ENCODE measurements at regions of chr11 and their contacts with region 1.

Region 1: GRCh38 chr11:93784152-93784934 is at the start of gene MED17:
- DNase-seq: peak; percentile 91

Region 2: DNA sequence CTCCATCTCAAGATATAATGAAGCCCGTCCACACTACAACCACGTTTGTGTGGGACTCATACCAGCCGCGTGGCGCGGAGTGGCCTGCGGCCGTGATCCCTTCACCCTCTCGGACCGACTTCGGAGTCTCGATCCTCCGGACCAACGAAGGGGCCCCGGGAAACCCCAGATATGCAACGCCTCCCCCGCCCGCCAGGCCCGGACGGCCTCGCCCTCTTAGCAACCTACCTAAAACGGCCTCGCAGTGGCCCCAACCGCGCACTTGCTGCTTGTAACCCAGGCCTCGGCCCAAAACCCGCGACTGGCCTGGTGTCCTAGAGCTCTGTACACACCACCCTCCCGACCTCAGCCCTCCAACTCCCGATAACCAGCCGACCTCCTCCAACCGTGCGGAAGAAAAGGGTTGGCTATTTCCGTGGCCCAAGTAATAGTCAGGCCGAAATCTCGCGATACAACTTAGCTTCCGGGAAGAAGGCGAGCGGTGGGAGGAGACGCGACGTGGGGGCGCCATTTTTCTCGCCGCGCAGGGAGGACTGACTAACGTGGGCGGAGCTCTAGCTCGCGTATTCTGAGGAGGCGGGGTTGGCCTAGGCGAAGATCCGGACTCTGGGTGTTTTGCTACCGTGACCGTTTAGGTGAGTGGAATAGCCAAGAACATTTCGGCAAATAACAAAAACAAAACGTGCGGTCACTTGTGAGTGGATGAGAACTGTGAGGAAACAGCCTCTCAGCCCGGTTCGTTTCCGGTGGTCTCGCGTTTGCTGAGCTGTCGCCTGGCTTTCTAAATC is 43.1 kb before region 1 on chr11 and contains the starts of genes C11orf54 and TAF1D:
- CTCF ChIA-PET with region 1: interaction called, 3 read pairs
- POLR2A ChIA-PET with region 1: interaction called, 119 read pairs
- DNase-seq: peak; percentile 87

Region 3: DNA sequence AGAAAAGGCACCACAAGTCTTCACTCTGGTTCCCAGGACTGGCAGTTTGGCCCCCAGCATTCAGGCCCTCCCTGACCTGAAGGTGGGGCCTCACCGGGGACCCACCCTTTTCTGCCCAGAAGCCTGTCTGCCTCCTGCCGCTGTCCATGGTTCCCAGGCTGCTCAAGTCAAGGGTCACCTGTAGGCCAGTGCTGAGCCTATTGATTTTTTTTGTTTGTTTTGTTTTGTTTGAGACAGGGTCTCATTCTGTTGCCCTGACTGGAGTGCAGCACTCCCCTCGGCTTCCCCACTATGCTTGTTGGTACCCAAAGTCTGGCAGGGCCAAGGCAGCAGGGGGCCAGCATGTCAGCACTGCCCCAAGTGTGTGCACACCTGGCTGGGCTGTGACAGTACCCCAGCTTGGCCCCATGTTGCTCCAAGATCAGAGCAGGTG is 11.3 kb before region 1 on chr11:
- CTCF ChIA-PET with region 1: interaction called, 3 read pairs
- POLR2A ChIA-PET with region 1: interaction called, 19 read pairs
- DNase-seq: no peak

Region 4: DNA sequence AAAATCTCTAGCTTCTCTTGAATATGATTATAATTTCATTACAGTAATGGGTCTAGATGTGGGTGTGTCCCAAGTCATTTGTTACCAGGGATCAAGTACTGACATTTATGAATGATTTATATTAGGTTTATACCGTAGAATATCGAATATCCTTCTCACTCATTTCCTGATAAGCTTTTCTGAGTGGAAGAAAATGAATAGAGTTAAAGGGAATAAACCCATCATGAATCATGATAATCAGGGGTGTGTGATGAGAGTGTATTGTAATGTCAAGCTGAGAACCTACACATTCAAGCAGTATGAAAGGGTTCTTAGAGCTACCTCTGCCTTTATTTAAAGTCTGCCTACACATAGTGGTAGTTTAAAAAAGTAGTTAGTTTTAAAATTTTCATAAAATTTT is 17.0 kb after region 1 on chr11:
- CTCF ChIA-PET with region 1: no interaction called
- POLR2A ChIA-PET with region 1: interaction called, 18 read pairs
- DNase-seq: no peak